ENCODE measurements at regions of chr21 and their contacts with region 1.

Region 1: DNA sequence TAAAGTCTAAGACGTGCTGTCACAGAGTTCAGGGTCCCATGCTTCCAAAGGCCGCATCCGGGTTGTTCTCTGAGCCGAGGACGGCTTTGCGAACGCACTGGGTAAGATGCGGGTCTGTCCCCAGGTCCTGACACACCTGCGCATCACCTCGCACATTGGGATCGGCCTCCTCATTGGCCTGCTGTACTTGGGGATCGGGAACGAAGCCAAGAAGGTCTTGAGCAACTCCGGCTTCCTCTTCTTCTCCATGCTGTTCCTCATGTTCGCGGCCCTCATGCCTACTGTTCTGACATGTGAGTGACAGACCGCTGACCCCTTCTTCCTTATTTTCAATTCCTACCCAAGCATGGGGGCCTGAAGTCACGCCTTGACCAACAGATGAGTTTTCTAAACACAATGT is 25.3 kb downstream of the TFF3 start:
- DNase-seq: no peak
- ATAC-seq: no peak
- H3K4me3 ChIP-seq: no peak overlapping the region
- H3K27ac ChIP-seq: no peak overlapping the region
- H3K4me1 ChIP-seq: peaks cover 28% of the 10 kb centered on the region
- H3K27me3 ChIP-seq: no peaks in the 10 kb centered on the region
- CTCF ChIP-seq: no peak
- EP300 ChIP-seq: no peak
- POLR2A ChIP-seq: no peak
- RAD21 ChIP-seq: no peak

Region 2: GRCh38 chr21:42164064-42164789 is 125.7 kb before region 1 on chr21:
- CTCF ChIA-PET with region 1: interaction called, 5 read pairs
- POLR2A ChIA-PET with region 1: no interaction called
- RAD21 ChIA-PET with region 1: interaction called, 4 read pairs
- SMC1A ChIA-PET with region 1: interaction called, 11 read pairs
- in situ Hi-C with region 1: no loop called
- intact Hi-C with region 1: no loop called
- DNase-seq: no peak
- ATAC-seq: peak; percentile 99
- H3K4me3 ChIP-seq: no peak overlapping the region
- H3K27ac ChIP-seq: no peak overlapping the region
- H3K4me1 ChIP-seq: no peaks in the 10 kb centered on the region
- H3K27me3 ChIP-seq: peaks cover 2 to 3% of the 10 kb centered on the region in 2 experiments; a peak in 3 of 4 replicates
- CTCF ChIP-seq: peak; percentile 73 to 90 (median 78)
- EP300 ChIP-seq: no peak
- POLR2A ChIP-seq: no peak
- RAD21 ChIP-seq: peak; percentile 99

Region 3: GRCh38 chr21:42233067-42233961 is 56.6 kb before region 1 on chr21:
- CTCF ChIA-PET with region 1: interaction called, 6 read pairs
- POLR2A ChIA-PET with region 1: interaction called, 12 read pairs
- RAD21 ChIA-PET with region 1: interaction called, 21 read pairs
- SMC1A ChIA-PET with region 1: interaction called, 34 read pairs
- in situ Hi-C with region 1: no loop called
- intact Hi-C with region 1: loop called (anchors 5 kb)
- DNase-seq: peak; percentile 82
- ATAC-seq: peak; percentile 71
- H3K4me3 ChIP-seq: no peak overlapping the region; the same call in 1 of the 2 replicates
- H3K27ac ChIP-seq: peak overlapping the region; percentile 84
- H3K4me1 ChIP-seq: peaks cover 69% of the 10 kb centered on the region
- H3K27me3 ChIP-seq: no peaks in the 10 kb centered on the region
- CTCF ChIP-seq: peak; percentile 37 to 47 (median 43); a peak in 4 of 6 replicates
- EP300 ChIP-seq: peak; percentile 91 to 98
- POLR2A ChIP-seq: no peak
- RAD21 ChIP-seq: 0 out of 2 replicates have a peak, but pooled peaks have one; percentile 7

Region 4: DNA sequence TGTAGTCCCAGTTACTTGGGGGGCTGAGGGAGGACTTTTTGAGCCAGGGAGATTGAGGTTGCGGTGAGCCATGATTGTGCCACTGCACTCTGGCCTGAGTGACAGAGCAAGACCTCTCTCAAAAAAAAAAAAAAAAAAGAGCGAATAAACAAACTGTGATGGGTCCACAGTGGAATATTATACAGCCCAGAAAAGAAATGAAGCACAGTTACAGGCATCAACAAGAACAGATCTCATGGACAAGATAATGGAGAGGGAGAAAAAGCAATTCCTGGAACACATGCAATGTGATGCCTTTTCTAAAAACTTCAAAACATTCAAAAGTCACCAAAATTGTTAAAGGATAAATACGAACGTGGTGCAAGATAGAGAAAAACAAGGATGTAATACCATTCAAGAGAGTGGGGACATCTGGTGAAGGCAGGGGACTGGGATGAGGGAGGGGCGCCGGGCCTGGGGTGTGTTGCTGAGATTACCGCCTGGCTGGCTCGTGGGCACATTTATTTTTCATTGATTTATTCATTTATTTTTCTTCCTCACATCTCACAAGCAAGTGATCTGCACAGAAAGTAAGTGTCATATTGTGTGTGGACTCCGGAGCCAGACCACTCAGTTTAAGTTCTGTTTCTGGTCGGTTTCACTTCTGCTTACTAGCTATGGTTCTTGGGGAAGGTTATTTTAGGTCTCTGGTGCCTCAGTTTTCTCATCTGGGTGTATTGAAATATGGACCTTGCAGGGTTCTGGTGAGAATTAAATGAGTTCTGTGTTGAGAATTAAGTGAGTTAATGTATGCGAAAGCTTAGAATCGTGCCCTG is 40.9 kb before region 1 on chr21:
- CTCF ChIA-PET with region 1: interaction called, 5 read pairs
- POLR2A ChIA-PET with region 1: interaction called, 3 read pairs
- RAD21 ChIA-PET with region 1: interaction called, 10 read pairs
- SMC1A ChIA-PET with region 1: interaction called, 7 read pairs
- in situ Hi-C with region 1: loop called (anchors 5 kb)
- intact Hi-C with region 1: no loop called
- DNase-seq: peak; percentile 76
- ATAC-seq: peak; percentile 99
- H3K4me3 ChIP-seq: peak overlapping the region; percentile 1; the same call in 1 of the 2 replicates
- H3K27ac ChIP-seq: peak overlapping the region; percentile 9; the same call in 1 of the 2 replicates
- H3K4me1 ChIP-seq: peaks cover 15% of the 10 kb centered on the region
- H3K27me3 ChIP-seq: no peaks in the 10 kb centered on the region
- CTCF ChIP-seq: no peak
- EP300 ChIP-seq: peak; percentile 44 to 86; a peak in 3 of 4 replicates
- POLR2A ChIP-seq: no peak
- RAD21 ChIP-seq: 0 out of 2 replicates have a peak, but pooled peaks have one; percentile 7

Region 5: DNA sequence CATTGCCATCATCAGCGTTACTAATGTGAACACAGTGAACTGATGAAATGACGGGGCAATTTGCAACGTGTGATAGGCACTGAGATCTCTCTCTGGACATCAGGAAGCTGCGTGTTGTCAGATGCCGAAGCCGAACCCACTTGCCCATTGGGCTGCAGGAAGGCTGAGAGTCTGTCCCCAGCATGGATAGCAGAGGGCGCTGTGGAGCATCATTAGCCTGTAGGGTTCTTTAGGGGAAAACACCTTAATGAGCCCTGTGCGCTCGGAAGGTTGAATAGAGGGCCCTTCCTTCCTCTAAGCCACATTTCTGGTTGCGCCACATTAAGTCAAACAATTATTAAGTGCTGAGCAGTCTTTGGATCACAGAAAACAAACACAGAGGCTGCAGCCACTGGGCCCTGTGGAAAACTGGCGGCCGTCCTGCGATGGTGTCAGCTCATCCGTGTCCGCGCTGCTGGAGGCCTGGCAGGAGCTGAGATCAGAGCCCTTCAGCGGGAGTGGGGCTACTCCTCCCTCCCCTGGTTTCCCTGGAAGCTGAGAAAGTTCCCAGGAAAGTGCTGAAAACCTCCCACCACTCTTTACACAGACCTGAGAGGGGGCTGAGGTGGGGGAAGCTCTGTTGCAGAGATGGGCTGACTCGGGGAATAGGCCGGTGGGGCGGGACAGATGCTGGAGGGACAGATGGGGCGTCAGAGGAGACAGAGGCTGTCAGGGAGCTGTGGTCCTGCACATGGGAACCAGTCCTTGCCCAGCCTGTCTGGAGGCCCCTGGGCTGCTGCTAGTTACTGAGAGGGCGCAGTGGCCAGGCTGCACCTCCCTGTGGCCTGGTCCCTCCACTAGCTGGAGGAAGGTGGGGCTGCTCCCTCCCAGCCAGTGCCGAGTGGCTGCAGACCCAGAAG is 48.2 kb after region 1 on chr21:
- CTCF ChIA-PET with region 1: no interaction called
- POLR2A ChIA-PET with region 1: no interaction called
- RAD21 ChIA-PET with region 1: interaction called, 5 read pairs
- SMC1A ChIA-PET with region 1: interaction called, 10 read pairs
- in situ Hi-C with region 1: no loop called
- intact Hi-C with region 1: loop called (anchors 5 kb)
- DNase-seq: no peak
- ATAC-seq: peak; percentile 90
- H3K4me3 ChIP-seq: no peak overlapping the region
- H3K27ac ChIP-seq: no peak overlapping the region
- H3K4me1 ChIP-seq: peaks cover 13% of the 10 kb centered on the region
- H3K27me3 ChIP-seq: no peaks in the 10 kb centered on the region
- CTCF ChIP-seq: peak; percentile 50 to 62 (median 53)
- EP300 ChIP-seq: no peak
- POLR2A ChIP-seq: no peak
- RAD21 ChIP-seq: peak; percentile 81